A673 (cell line): ENCODE measurements at regions of chr17 and their contacts with region 1.

Region 1: DNA sequence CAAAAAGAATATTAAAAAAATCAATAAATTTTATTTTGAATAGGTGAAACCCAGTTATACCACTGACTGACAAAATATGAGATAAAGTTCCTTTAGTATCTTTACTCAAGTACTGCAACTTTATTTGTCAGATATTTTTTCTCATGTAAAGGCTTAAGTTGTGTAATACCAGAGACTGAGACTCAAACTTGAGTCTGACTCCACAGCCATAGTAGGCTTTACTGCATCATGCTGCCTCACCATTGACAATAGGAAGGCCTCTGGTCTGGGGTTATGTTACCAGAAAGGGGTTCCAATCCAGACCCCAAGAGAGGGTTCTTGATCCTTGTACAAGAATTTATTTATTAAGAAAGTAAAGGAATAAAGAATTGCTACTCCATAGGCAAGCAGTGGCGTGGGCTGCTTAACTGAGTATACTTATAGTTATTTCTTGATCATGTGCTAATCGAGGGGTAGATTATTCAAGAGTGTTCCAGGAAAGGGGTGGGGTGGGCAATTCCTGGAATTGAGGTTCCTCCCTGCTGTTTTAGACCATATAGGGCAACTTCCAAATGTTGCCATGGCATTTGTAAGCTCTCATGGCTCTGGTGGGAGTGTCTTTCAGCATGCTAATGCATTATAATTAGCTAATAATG is 187.4 kb upstream of the WSB1 start:
- DNase-seq: no peak
- H3K4me3 ChIP-seq: no peak overlapping the region
- H3K27ac ChIP-seq: no peak overlapping the region
- H3K4me1 ChIP-seq: no peaks in the 10 kb centered on the region
- H3K27me3 ChIP-seq: no peaks in the 10 kb centered on the region
- CTCF ChIP-seq: no peak

Region 2: GRCh38 chr17:27069842-27070508 is 36.5 kb before region 1 on chr17:
- CTCF ChIA-PET with region 1: no interaction called
- POLR2A ChIA-PET with region 1: no interaction called
- intact Hi-C with region 1: loop called (anchors 10 kb)
- DNase-seq: no peak
- H3K4me3 ChIP-seq: no peak overlapping the region
- H3K27ac ChIP-seq: no peak overlapping the region
- H3K4me1 ChIP-seq: no peaks in the 10 kb centered on the region
- H3K27me3 ChIP-seq: no peaks in the 10 kb centered on the region
- CTCF ChIP-seq: no peak